CD8-positive, alpha-beta T cell (primary cell): ENCODE measurements at regions of chr1 and their contacts with region 1.

Region 1: GRCh38 chr1:59296358-59297256 is at the start of gene FGGY:
- DNase-seq: peak; percentile 69 to 96 (median 84)
- ATAC-seq: peak; percentile 92
- H3K4me3 ChIP-seq: peak within 1 kb of the TSS; percentile 75 to 77
- H3K4me3 Mint-ChIP-seq: peak within 1 kb of the TSS; percentile 90
- H3K27ac ChIP-seq: peak within 1 kb of the TSS; percentile 81 to 92
- H3K27ac Mint-ChIP-seq: peak within 1 kb of the TSS; percentile 96
- H3K4me1 ChIP-seq: no peaks in the 10 kb centered on the region
- H3K4me1 Mint-ChIP-seq: peaks cover 25% of the 10 kb centered on the region
- H3K27me3 ChIP-seq: no peaks in the 10 kb centered on the region
- H3K27me3 Mint-ChIP-seq: no peaks in the 10 kb centered on the region
- CTCF ChIP-seq: no peak
- total RNA-seq, gene FGGY: 12.8 to 14.3 TPM

Region 2: GRCh38 chr1:58515794-58516401 is 780.7 kb before region 1 on chr1:
- CTCF ChIA-PET with region 1: no interaction called
- POLR2A ChIA-PET with region 1: no interaction called
- intact Hi-C with region 1: loop called in 1 of 2 experiments (anchors 10 kb)
- DNase-seq: peak in 5 of 9 experiments; percentile 16 to 82 (median 27)
- ATAC-seq: peak; percentile 42
- H3K4me3 ChIP-seq: no peak overlapping the region
- H3K4me3 Mint-ChIP-seq: no peak overlapping the region
- H3K27ac ChIP-seq: no peak overlapping the region
- H3K27ac Mint-ChIP-seq: peak overlapping the region; percentile 71
- H3K4me1 ChIP-seq: no peaks in the 10 kb centered on the region
- H3K4me1 Mint-ChIP-seq: peaks cover 8% of the 10 kb centered on the region
- H3K27me3 ChIP-seq: no peaks in the 10 kb centered on the region
- H3K27me3 Mint-ChIP-seq: no peaks in the 10 kb centered on the region
- CTCF ChIP-seq: peak; percentile 72

Region 3: DNA sequence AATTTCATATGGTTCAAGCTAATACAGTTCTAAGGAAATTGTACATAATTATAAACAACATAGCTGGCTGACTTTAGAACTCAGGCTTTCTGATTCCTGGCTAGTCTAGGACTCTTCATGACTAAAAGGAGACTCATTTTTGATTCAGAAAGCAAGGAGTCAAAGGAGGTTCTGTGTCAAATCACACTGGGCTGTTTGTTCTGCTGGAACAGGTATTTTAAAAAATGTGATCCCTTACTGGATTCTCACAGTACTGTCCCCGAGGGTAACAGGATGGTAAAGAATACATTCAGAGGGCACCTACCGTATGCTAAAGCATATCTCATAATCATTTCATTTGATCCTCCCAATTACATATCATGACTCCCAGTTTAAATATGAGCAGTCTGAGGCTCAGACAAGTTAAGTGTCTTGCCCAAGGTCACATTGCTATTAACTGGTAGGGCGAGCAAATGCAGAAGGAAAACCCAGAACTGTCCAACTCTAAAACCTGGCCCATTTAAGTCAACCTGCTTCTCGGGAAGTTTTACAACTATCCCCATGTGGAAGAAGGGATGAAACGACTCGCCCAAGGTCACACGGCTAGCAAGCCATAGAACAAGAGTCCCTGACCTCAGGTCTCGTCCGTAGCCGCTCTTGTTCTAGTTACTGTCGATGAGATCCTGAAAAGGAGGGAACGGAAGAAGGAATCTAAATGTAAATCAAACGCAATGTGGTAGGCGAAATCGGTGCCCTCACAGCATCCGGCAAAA is 597.4 kb before region 1 on chr1:
- CTCF ChIA-PET with region 1: no interaction called
- POLR2A ChIA-PET with region 1: no interaction called
- intact Hi-C with region 1: loop called in 1 of 2 experiments (anchors 5 kb)
- DNase-seq: peak in 1 of 9 experiments; percentile 51
- ATAC-seq: no peak
- H3K4me3 ChIP-seq: peak overlapping the region; percentile 86 to 100
- H3K4me3 Mint-ChIP-seq: peak overlapping the region; percentile 99
- H3K27ac ChIP-seq: peak overlapping the region; percentile 84 to 93
- H3K27ac Mint-ChIP-seq: peak overlapping the region; percentile 98
- H3K4me1 ChIP-seq: peaks cover 28% of the 10 kb centered on the region
- H3K4me1 Mint-ChIP-seq: peaks cover 25% of the 10 kb centered on the region
- H3K27me3 ChIP-seq: no peaks in the 10 kb centered on the region
- H3K27me3 Mint-ChIP-seq: no peaks in the 10 kb centered on the region
- CTCF ChIP-seq: no peak

Region 4: DNA sequence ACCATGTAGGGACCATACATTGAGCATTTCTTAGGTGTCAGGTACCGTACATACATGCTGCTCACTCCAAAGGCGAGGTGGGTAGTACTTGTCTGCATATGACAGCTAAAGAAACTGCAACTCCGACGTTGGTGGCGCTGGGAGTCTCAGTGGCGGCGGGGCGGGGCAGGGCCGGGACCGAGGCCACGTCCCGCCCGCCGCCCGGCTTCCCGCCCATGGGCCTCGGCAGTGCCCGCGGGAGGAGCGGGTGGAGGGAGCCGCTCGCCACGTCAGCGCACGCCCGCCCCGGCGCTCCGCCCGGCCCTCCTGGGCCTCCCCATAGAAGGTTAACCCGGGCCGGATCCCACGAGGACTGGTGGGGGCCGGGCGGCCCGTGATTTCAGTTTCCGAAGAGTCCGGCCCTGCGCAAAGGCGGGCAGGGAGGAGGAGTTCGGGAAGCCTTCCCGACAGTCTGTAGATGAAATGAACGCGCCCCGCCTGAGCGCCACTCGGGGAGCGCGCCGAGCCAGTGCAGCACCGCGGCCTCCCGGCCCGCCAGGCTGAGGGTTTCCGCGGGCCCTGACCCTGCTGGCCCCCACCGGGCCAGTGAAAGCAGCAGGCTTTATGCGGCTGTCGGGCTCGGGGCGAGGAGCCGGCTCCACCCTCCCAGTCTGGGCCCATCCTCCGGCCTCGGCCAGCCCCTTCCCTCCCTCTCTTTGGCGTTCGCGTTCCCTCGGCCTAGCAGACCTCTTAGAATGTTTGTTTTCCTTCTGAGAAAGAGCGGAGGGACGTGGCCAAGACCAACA is 392.9 kb before region 1 on chr1:
- CTCF ChIA-PET with region 1: no interaction called
- POLR2A ChIA-PET with region 1: no interaction called
- intact Hi-C with region 1: loop called (anchors 5 kb)
- DNase-seq: peak; percentile 33 to 83 (median 69)
- ATAC-seq: peak; percentile 86
- H3K4me3 ChIP-seq: peak overlapping the region; percentile 47 to 53
- H3K4me3 Mint-ChIP-seq: peak overlapping the region; percentile 82
- H3K27ac ChIP-seq: peak overlapping the region; percentile 34 to 76
- H3K27ac Mint-ChIP-seq: peak overlapping the region; percentile 84
- H3K4me1 ChIP-seq: peaks cover 11% of the 10 kb centered on the region
- H3K4me1 Mint-ChIP-seq: peaks cover 18% of the 10 kb centered on the region
- H3K27me3 ChIP-seq: no peaks in the 10 kb centered on the region
- H3K27me3 Mint-ChIP-seq: no peaks in the 10 kb centered on the region
- CTCF ChIP-seq: no peak

Region 5: DNA sequence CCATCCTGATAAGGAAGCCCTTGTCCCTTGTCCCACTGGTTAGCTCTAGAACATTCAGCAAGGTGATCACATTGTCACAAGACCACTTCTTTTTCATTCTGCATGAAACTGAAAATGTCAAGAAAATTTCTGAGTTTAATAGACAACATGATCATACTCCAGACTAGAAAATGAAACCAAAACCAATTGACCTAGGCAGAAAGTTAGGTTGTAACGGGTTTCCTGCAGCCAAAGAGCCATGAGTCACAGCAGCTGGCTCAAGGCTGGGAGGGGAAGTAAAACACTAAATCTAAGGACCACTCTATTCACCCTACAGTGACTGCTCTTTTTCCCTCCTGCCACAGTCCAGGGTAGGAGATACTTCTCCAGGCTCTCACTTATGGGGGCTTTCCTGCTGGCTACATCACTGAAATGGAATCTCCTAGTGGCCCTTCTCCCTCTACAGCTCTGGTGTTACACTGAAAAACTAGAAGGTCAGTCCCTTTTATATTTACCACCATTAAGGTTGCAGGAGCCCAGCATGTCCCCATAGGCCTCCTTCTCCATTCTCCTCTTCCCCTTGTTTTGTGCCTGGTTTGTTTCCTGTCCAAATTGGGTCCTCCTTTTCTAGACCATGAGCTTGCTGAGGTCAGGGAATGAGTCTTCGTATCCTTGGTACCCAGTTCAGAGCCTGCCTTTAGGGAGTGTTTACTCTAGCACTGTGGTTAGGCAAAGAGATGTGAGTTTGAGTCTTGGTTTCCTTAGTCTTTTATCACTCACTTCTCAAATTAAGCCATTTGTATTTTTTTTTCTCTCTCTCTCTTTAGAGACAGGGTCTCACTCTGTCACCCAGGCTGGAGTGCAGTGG is 276.2 kb before region 1 on chr1:
- CTCF ChIA-PET with region 1: no interaction called
- POLR2A ChIA-PET with region 1: no interaction called
- intact Hi-C with region 1: loop called in 1 of 2 experiments (anchors 5 kb)
- DNase-seq: peak in 8 of 9 experiments; percentile 18 to 82 (median 54)
- ATAC-seq: peak; percentile 87
- H3K4me3 ChIP-seq: peak overlapping the region; percentile 6 to 22
- H3K4me3 Mint-ChIP-seq: peak overlapping the region; percentile 81
- H3K27ac ChIP-seq: peak overlapping the region; percentile 24 to 76
- H3K27ac Mint-ChIP-seq: peak overlapping the region; percentile 92
- H3K4me1 ChIP-seq: peaks cover 15% of the 10 kb centered on the region
- H3K4me1 Mint-ChIP-seq: peaks cover 25% of the 10 kb centered on the region
- H3K27me3 ChIP-seq: no peaks in the 10 kb centered on the region
- H3K27me3 Mint-ChIP-seq: no peaks in the 10 kb centered on the region
- CTCF ChIP-seq: no peak